Heart right ventricle (tissue), 16 donors: ENCODE measurements at regions of chr11 and their contacts with region 1.

Region 1: GRCh38 chr11:76807206-76807875 is 24.2 kb downstream of the TSKU start:
- DNase-seq: peak; percentile 87 to 88
- ATAC-seq: peak; percentile 76 to 92 (median 86)
- H3K4me3 ChIP-seq: peak overlapping the region in 5 of 10 donors; percentile 2 to 38 (median 15)
- H3K27ac ChIP-seq: peak overlapping the region in 2 of 10 donors; percentile 13 to 21
- H3K4me1 ChIP-seq: peaks cover 0 to 40% (median 18%) of the 10 kb centered on the region in 9 donors
- H3K27me3 ChIP-seq: no peaks in the 10 kb centered on the region
- CTCF ChIP-seq: peak; percentile 63 to 88 (median 84)

Region 2: DNA sequence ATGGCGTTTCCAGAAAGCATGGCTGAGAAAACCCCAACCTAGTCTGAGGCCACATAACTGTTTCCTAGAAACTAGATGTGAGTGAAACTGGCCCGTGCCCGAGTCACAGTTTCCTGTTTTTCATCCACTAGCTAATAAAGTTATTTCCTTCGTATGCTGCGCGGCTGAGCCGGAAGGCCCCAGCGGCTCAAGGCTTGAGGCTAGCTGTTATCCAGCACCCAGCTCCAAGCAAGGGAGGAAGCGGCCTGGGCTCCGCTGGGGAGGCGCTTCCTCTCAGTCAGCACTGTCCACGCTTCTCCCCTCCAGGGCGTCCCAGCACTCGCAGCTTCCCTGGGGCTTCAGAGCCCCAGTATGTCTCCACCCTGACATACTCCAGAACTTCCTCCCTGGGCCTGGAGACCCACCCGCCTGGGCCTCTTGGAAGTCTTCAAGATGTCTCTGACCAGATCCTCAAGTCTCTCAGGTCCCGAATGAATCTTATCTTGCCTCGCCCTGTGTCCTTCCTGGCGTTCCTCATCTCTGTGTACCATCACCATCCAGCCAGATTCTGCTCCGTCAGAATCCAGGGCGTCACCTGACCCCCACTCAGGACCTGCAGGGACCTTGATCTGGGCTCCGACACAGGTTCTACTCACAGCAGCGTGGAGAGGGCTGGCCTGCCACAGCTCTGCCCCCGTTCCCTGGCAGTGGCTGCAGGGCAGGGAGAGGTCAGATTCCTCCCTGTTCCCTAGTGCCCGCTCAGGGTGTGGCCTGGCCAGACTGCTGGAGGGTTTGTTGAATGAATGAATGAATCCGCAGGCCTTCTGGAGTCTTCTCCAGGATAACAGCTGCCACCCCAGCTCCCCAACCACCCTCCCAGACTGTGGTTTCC is 218.7 kb before region 1 on chr11:
- intact Hi-C with region 1: no loop called
- DNase-seq: peak; percentile 77 to 84
- ATAC-seq: peak; percentile 90 to 97 (median 96)
- H3K4me3 ChIP-seq: no peak overlapping the region
- H3K27ac ChIP-seq: peak overlapping the region; percentile 61 to 89 (median 82)
- H3K4me1 ChIP-seq: peaks cover 6 to 30% (median 20%) of the 10 kb centered on the region in 9 donors
- H3K27me3 ChIP-seq: no peaks in the 10 kb centered on the region
- CTCF ChIP-seq: no peak

Region 3: DNA sequence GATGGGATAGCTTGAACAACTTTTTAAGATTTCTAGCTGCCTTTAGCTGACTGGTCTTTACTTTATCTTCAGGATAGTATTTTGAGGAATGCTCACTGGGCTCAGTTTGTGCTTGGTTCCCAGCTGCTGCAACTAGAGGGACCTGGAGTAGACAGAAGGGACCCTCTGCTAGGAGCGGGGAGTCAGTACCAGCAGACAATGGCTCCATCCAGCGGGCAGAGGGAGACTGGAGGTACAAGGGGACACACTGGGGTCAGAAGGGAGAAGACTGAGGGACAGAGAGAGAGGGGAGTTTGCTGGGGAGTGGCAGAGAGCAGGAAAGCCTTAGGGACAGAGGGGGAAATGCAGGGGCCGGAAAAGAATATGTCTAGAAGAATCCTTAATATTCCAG is 31.3 kb after region 1 on chr11:
- intact Hi-C with region 1: loop called in 1 of 10 experiments (anchors 2 kb)
- DNase-seq: peak; percentile 24 to 44
- ATAC-seq: peak in 6 of 8 donors; percentile 25 to 86 (median 67)
- H3K4me3 ChIP-seq: no peak overlapping the region
- H3K27ac ChIP-seq: peak overlapping the region in 4 of 10 donors; percentile 26 to 74 (median 54)
- H3K4me1 ChIP-seq: peaks cover 6 to 46% (median 30%) of the 10 kb centered on the region in 9 donors
- H3K27me3 ChIP-seq: no peaks in the 10 kb centered on the region
- CTCF ChIP-seq: peak; percentile 9 to 64 (median 32)

Region 4: GRCh38 chr11:76850130-76850529 is 42.8 kb after region 1 on chr11:
- intact Hi-C with region 1: no loop called
- DNase-seq: no peak
- ATAC-seq: no peak
- H3K4me3 ChIP-seq: no peak overlapping the region
- H3K27ac ChIP-seq: no peak overlapping the region
- H3K4me1 ChIP-seq: peaks cover 0 to 20% (median 5%) of the 10 kb centered on the region in 9 donors
- H3K27me3 ChIP-seq: no peaks in the 10 kb centered on the region
- CTCF ChIP-seq: no peak

Region 5: GRCh38 chr11:76860539-76861475 is 53.5 kb after region 1 on chr11 and contains the start of gene ACER3:
- intact Hi-C with region 1: loop called in 1 of 10 experiments (anchors 5 kb)
- DNase-seq: peak; percentile 89 to 95
- ATAC-seq: peak; percentile 97 to 100 (median 98)
- H3K4me3 ChIP-seq: peak within 1 kb of the TSS; percentile 62 to 94 (median 82)
- H3K27ac ChIP-seq: peak within 1 kb of the TSS; percentile 63 to 95 (median 89)
- H3K4me1 ChIP-seq: peaks cover 0 to 70% (median 32%) of the 10 kb centered on the region in 9 donors
- H3K27me3 ChIP-seq: no peaks in the 10 kb centered on the region
- CTCF ChIP-seq: peak in 4 of 9 donors; percentile 12 to 36 (median 32)
- total RNA-seq, gene ACER3: 8.9 to 14.8 (median 10.6) TPM

Region 6: GRCh38 chr11:77039491-77040400 is 232.4 kb after region 1 on chr11:
- intact Hi-C with region 1: loop called in 1 of 10 experiments (anchors 10 kb)
- DNase-seq: peak in 1 of 2 donors; percentile 28
- ATAC-seq: peak; percentile 35 to 80 (median 45)
- H3K4me3 ChIP-seq: peak overlapping the region; percentile 12 to 54 (median 42)
- H3K27ac ChIP-seq: no peak overlapping the region
- H3K4me1 ChIP-seq: peaks cover 2 to 14% (median 11%) of the 10 kb centered on the region in 9 donors
- H3K27me3 ChIP-seq: peaks cover 7 to 74% (median 66%) of the 10 kb centered on the region in 7 donors
- CTCF ChIP-seq: peak in 7 of 9 donors; percentile 34 to 55 (median 46)

Region 7: GRCh38 chr11:77082838-77083562 is 275.7 kb after region 1 on chr11:
- intact Hi-C with region 1: loop called in 1 of 10 experiments (anchors 10 kb)
- DNase-seq: peak; percentile 54 to 62
- ATAC-seq: peak; percentile 42 to 87 (median 82)
- H3K4me3 ChIP-seq: peak overlapping the region in 3 of 10 donors; percentile 3 to 20 (median 14)
- H3K27ac ChIP-seq: peak overlapping the region in 9 of 10 donors; percentile 33 to 83 (median 60)
- H3K4me1 ChIP-seq: peaks cover 9 to 28% (median 18%) of the 10 kb centered on the region in 9 donors
- H3K27me3 ChIP-seq: no peaks in the 10 kb centered on the region
- CTCF ChIP-seq: no peak

Region 8: DNA sequence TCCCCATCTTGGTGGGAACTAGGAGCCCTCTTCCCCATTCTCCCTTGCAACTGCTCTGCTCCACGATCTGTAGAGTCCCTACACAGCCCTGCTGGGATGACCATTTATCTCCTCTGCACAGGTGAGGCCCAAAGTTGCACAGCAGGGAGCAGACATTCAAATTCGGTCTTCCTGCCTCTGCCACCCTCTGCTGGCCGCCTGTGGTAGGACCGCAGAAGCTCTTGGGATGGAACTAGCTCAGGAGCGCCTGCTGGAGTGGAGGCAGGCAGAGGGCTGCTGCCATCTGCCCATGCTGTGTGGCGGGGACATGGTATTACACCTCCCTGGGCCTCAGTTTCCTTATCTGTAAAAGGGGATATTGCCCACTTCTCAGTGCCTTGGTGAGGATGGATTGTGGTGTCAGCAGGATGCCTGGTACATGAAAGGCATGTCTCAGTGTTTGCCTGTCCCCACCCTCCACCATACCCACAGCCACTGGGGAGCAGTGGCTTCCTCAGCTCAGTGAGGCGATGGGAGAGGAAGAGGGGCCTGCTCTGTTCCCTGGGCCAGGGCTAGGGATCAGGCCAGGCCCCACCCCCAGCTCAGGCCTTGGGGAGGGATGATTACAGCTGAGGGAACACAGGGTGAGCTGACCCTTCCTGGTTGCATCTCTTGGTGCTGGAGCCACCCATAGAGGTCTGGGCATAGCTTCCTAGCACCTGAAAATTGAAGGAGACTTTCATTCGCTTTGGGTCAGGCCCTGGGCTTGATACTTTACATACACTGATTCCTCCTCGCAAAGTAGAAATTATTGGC is 284.0 kb after region 1 on chr11:
- intact Hi-C with region 1: loop called in 3 of 10 experiments (anchors 5 to 10 kb)
- DNase-seq: peak; percentile 78 to 80
- ATAC-seq: peak; percentile 68 to 80 (median 78)
- H3K4me3 ChIP-seq: no peak overlapping the region
- H3K27ac ChIP-seq: no peak overlapping the region
- H3K4me1 ChIP-seq: peaks cover 0 to 8% (median 0%) of the 10 kb centered on the region in 9 donors
- H3K27me3 ChIP-seq: no peaks in the 10 kb centered on the region
- CTCF ChIP-seq: peak; percentile 80 to 94 (median 91)